SK-N-SH (cell line): ENCODE measurements at regions of chr3 and their contacts with region 1.

Region 1: DNA sequence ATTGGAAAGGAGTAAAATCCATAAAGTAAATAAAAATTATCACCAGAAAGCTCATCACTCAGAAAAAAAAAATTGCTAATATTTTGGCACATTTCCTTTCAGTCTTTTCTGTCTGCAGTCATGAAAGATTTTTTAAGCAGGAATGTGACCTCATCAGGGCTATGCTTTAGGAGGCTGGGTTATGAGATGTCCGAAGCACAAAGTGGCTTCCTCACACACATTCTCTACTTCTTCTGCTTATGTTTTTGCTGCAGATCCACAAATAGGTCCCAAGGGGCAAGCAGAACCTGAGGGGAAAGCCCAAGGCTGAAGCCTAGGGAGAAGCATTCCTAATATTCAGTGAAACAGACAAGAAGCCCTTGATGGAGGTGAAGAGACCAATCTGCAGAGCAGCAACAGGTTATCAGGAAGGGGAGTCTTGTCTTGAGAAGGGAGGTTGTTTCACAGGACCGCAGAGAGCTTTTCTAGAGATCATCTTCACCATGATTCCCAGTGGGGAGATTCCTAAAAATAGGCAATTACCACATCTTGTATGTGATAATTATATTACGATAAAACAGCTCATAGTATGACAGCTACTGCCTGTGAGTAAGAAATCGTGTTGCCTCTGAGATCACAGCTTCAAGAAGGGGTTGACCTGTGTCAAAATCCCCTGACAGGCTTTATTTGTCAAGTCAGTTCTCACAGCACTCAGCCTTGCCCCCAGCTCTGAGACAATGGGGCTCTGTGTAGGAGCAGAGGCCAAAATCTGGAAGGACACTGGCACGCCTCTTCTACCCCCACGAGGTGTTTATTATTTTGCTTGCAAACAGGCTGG is 60.5 kb downstream of the IGF2BP2 start:
- DNase-seq: no peak
- H3K4me3 ChIP-seq: no peak overlapping the region
- H3K27ac ChIP-seq: peak overlapping the region in 1 of 2 experiments; percentile 53; a peak in 2 of 4 replicates
- H3K4me1 ChIP-seq: peaks cover 0 to 55% of the 10 kb centered on the region in 2 experiments
- H3K27me3 ChIP-seq: no peaks in the 10 kb centered on the region
- CTCF ChIP-seq: no peak
- EP300 ChIP-seq: no peak
- RAD21 ChIP-seq: no peak

Region 2: DNA sequence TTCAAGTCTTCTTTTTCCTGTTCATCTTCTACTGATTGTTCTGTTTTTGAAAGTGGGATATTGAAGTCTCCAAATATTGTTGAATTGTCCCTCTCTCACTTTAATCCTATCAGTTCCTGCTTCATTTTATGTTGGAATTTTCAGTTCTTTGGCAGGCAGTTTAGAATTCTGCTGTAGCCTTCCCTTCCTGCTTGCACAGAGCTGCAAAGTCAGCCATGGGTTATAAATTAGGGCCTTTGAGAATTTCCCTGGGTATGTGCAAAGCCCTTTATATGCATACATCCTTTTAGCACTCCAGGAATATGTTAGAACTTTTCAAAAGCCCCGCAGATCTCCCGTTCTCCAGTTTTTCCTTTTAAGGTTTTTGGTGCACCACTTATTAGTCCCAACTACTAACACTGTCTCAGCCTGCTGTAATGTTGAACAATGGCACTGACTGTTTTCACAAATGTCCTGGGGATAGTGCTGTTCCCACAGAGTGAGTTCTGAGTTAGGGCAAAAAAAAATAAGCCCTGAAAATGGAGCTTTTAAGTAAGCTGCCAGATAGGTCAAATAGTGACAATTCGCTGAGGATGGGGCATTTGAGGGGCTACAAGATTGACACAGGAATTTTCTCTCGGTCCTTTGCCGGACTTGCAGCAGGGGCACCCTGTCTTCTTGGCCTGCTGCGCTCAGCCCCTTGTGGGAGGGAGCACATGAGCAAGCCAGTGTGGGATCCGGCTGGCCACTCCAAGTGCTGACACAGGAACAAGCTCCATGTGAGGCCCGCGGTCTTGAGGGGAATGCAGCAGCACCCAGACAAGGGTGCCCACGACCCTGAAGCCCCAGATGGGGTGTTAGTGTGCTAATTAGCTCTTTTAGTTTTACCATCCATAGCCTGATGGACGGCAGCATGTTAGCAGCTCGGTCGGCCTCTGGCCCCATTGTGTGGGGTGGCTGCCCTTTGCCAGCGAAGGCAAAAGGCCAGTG is 856.4 kb before region 1 on chr3:
- CTCF ChIA-PET with region 1: no interaction called
- POLR2A ChIA-PET with region 1: no interaction called
- DNase-seq: no peak
- H3K4me3 ChIP-seq: no peak overlapping the region
- H3K27ac ChIP-seq: no peak overlapping the region
- H3K4me1 ChIP-seq: no peaks in the 10 kb centered on the region
- H3K27me3 ChIP-seq: no peaks in the 10 kb centered on the region
- CTCF ChIP-seq: no peak
- EP300 ChIP-seq: no peak
- RAD21 ChIP-seq: no peak

Region 3: GRCh38 chr3:185645596-185646381 is 118.6 kb before region 1 on chr3:
- CTCF ChIA-PET with region 1: interaction called, 23 read pairs
- POLR2A ChIA-PET with region 1: no interaction called
- DNase-seq: peak; percentile 36
- H3K4me3 ChIP-seq: no peak overlapping the region
- H3K27ac ChIP-seq: no peak overlapping the region
- H3K4me1 ChIP-seq: peaks cover 0 to 4% of the 10 kb centered on the region in 2 experiments; a peak in 1 of 4 replicates
- H3K27me3 ChIP-seq: no peaks in the 10 kb centered on the region
- CTCF ChIP-seq: no peak
- EP300 ChIP-seq: no peak
- RAD21 ChIP-seq: no peak

Region 4: GRCh38 chr3:185667574-185667973 is 96.8 kb before region 1 on chr3:
- CTCF ChIA-PET with region 1: interaction called, 194 read pairs
- POLR2A ChIA-PET with region 1: no interaction called
- DNase-seq: no peak
- H3K4me3 ChIP-seq: no peak overlapping the region
- H3K27ac ChIP-seq: no peak overlapping the region
- H3K4me1 ChIP-seq: no peaks in the 10 kb centered on the region
- H3K27me3 ChIP-seq: no peaks in the 10 kb centered on the region
- CTCF ChIP-seq: no peak
- EP300 ChIP-seq: no peak
- RAD21 ChIP-seq: no peak

Region 5: GRCh38 chr3:185744997-185745843 is 19.2 kb before region 1 on chr3:
- CTCF ChIA-PET with region 1: interaction called, 18 read pairs
- POLR2A ChIA-PET with region 1: no interaction called
- DNase-seq: no peak
- H3K4me3 ChIP-seq: no peak overlapping the region
- H3K27ac ChIP-seq: peak overlapping the region in 1 of 2 experiments; percentile 98; a peak in 2 of 4 replicates
- H3K4me1 ChIP-seq: peaks cover 0 to 28% of the 10 kb centered on the region in 2 experiments; a peak in 2 of 4 replicates
- H3K27me3 ChIP-seq: no peaks in the 10 kb centered on the region
- CTCF ChIP-seq: no peak
- EP300 ChIP-seq: no peak; a peak in 1 of 4 replicates
- RAD21 ChIP-seq: no peak

Region 6: DNA sequence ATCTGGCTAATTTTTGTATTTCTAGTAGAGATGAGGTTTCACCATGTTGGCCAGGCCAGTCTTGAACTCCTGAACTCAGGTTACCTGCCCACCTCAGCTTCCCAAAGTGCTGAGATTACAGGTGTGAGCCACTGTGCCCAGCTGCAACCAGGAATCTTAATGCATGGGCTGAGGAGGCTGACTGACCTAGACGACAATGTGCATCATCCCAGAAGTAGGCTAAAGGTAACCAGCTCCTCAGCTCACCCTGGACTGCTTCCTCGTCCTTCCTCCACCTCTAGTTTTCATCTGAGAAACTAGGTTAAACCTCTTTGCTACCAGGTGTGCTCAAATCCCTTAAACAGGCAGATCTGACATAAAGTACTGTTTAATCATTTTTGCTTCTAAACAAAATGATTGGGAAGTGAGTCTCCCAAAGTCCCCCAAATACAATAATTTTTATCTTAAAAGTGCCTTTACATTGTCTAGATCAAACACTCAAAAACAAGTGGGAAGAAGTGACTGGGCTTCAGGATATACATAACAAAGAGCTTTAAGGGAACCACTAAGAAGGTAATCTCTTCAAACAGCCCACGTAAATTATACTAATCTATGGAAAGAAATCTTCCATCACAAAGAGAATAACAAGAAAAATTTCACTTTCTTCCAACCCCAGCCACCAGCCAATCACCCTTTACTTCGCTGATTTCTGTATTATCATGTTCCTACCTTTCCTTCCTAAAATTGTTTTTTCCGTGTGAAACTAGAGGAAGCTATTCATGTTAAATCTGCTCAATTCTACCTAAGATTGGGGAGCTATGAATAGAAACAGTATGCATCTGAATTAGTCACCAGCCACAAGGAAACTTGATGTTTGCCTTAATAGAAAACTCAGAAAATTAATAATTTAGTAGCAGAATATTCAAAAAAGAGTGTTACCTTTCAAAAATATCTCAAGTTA is 25.8 kb after region 1 on chr3:
- CTCF ChIA-PET with region 1: interaction called, 23 read pairs
- POLR2A ChIA-PET with region 1: no interaction called
- DNase-seq: no peak
- H3K4me3 ChIP-seq: no peak overlapping the region
- H3K27ac ChIP-seq: peak overlapping the region in 1 of 2 experiments; percentile 48; a peak in 2 of 4 replicates
- H3K4me1 ChIP-seq: peaks cover 0 to 23% of the 10 kb centered on the region in 2 experiments; a peak in 1 of 4 replicates
- H3K27me3 ChIP-seq: no peaks in the 10 kb centered on the region
- CTCF ChIP-seq: no peak
- EP300 ChIP-seq: no peak
- RAD21 ChIP-seq: no peak